Natural killer cell (primary cell): ENCODE measurements at regions of chr9 and their contacts with region 1.

Region 1: GRCh38 chr9:32395490-32396216 is 11.2 kb downstream of the ACO1 start:
- DNase-seq: no peak
- ATAC-seq: no peak
- H3K4me3 ChIP-seq: no peak overlapping the region
- H3K4me3 Mint-ChIP-seq: no peak overlapping the region
- H3K27ac ChIP-seq: no peak overlapping the region
- H3K27ac Mint-ChIP-seq: no peak overlapping the region
- H3K4me1 ChIP-seq: no peaks in the 10 kb centered on the region
- H3K4me1 Mint-ChIP-seq: no peaks in the 10 kb centered on the region
- H3K27me3 ChIP-seq: no peaks in the 10 kb centered on the region
- H3K27me3 Mint-ChIP-seq: no peaks in the 10 kb centered on the region
- CTCF ChIP-seq: no peak

Region 2: GRCh38 chr9:32454280-32454679 is 58.6 kb after region 1 on chr9:
- intact Hi-C with region 1: no loop called
- DNase-seq: no peak
- ATAC-seq: peak in 1 of 3 donors; percentile 78
- H3K4me3 ChIP-seq: no peak overlapping the region
- H3K4me3 Mint-ChIP-seq: no peak overlapping the region
- H3K27ac ChIP-seq: no peak overlapping the region
- H3K27ac Mint-ChIP-seq: no peak overlapping the region
- H3K4me1 ChIP-seq: no peaks in the 10 kb centered on the region
- H3K4me1 Mint-ChIP-seq: no peaks in the 10 kb centered on the region
- H3K27me3 ChIP-seq: no peaks in the 10 kb centered on the region
- H3K27me3 Mint-ChIP-seq: no peaks in the 10 kb centered on the region
- CTCF ChIP-seq: no peak

Region 3: GRCh38 chr9:32487981-32488380 is 92.3 kb after region 1 on chr9:
- intact Hi-C with region 1: loop called (anchors 10 kb)
- DNase-seq: no peak
- ATAC-seq: no peak
- H3K4me3 ChIP-seq: no peak overlapping the region
- H3K4me3 Mint-ChIP-seq: no peak overlapping the region
- H3K27ac ChIP-seq: no peak overlapping the region
- H3K27ac Mint-ChIP-seq: peak overlapping the region in 1 of 2 donors; percentile 37
- H3K4me1 ChIP-seq: no peaks in the 10 kb centered on the region
- H3K4me1 Mint-ChIP-seq: no peaks in the 10 kb centered on the region
- H3K27me3 ChIP-seq: no peaks in the 10 kb centered on the region
- H3K27me3 Mint-ChIP-seq: no peaks in the 10 kb centered on the region
- CTCF ChIP-seq: no peak

Region 4: GRCh38 chr9:32589083-32589723 is 193.6 kb after region 1 on chr9:
- intact Hi-C with region 1: no loop called
- DNase-seq: peak in 1 of 2 donors; percentile 45
- ATAC-seq: peak in 1 of 3 donors; percentile 49
- H3K4me3 ChIP-seq: no peak overlapping the region
- H3K4me3 Mint-ChIP-seq: no peak overlapping the region
- H3K27ac ChIP-seq: no peak overlapping the region
- H3K27ac Mint-ChIP-seq: no peak overlapping the region
- H3K4me1 ChIP-seq: no peaks in the 10 kb centered on the region
- H3K4me1 Mint-ChIP-seq: no peaks in the 10 kb centered on the region
- H3K27me3 ChIP-seq: peaks cover 7% of the 10 kb centered on the region
- H3K27me3 Mint-ChIP-seq: peaks cover 26 to 56% of the 10 kb centered on the region in 2 donors
- CTCF ChIP-seq: no peak